ENCODE measurements at regions of chr22 and their contacts with region 1.

Region 1: DNA sequence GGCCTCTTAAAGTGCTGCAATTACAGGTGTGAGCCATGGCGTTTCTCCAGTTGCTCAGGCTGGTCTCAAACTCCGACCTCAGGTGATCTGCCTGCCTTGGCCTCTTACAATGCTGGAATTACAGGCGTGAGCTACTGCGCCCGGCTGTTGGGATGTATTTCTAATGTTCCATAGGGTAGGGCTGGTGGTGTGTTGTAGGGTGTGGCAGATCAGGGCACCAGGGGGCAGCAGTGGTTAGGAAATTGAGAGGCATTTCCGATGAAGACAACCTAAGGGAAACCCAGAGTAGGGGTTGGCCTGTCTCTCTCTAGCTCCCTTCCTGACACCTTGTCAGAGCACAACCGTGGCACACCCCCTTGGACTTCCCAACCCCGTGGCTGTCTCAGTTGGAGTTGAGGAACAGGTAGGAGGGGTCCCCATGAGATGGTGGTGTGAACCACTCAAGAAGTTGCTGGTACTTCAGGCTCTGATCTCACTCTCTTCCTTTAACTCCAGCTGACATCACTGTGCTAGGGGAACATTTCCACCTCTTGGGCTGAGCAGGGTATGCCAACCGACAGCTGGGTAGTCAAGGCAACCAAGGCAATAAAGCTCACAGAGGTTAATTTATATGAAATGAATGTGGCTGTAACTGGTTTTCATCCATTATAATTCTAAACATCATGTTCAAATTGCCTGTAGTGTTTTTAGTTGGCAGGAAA is 33.0 kb downstream of the YWHAH start:
- DNase-seq: peak; percentile 89
- H3K4me3 Mint-ChIP-seq: no peak overlapping the region
- H3K27ac Mint-ChIP-seq: no peak overlapping the region
- H3K4me1 Mint-ChIP-seq: peaks cover 2% of the 10 kb centered on the region
- H3K27me3 Mint-ChIP-seq: peaks cover 2% of the 10 kb centered on the region

Region 2: DNA sequence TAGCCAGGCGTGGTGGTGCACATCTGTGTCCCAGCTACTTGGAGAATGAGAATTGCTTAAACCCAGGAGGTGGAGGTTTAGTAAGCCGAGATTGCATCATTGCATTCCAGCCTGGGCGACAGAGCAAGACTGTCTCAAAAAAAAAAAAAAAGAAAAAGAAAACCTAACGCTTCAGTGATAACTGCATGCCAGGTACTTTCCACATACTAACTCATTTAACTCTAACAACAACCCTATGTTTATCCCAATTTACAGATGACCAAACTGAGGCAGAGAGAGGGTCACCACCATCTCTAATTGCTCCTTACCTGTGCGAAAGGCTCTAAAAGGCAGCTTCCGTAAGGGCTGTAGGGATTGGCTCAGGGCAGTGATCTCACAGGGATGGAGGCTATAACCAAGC is 326.9 kb before region 1 on chr22:
- CTCF ChIA-PET with region 1: no interaction called
- POLR2A ChIA-PET with region 1: no interaction called
- intact Hi-C with region 1: no loop called
- DNase-seq: no peak
- H3K4me3 Mint-ChIP-seq: no peak overlapping the region
- H3K27ac Mint-ChIP-seq: no peak overlapping the region
- H3K4me1 Mint-ChIP-seq: peaks cover 59% of the 10 kb centered on the region
- H3K27me3 Mint-ChIP-seq: no peaks in the 10 kb centered on the region

Region 3: DNA sequence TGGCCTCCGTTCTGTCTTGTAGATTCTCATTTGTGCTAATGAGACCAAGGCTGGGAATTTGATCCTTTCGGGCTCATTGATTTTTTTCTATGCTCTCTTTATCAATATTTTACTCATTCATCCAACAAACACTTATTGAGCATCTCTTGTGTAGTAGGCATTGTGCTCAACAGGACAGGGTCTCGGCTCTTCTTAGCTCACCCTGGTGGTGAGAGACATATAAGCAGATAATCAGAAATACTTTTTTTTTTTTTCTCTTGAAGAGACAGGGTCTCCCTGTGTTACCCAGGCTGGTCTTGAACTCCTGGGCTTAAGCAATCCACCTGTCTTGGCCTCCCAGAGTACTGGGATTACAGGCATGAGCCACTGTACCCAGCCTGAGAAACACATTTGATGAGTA is 17.8 kb after region 1 on chr22:
- CTCF ChIA-PET with region 1: interaction called, 12 read pairs
- POLR2A ChIA-PET with region 1: no interaction called
- intact Hi-C with region 1: no loop called
- DNase-seq: no peak
- H3K4me3 Mint-ChIP-seq: no peak overlapping the region
- H3K27ac Mint-ChIP-seq: no peak overlapping the region
- H3K4me1 Mint-ChIP-seq: no peaks in the 10 kb centered on the region
- H3K27me3 Mint-ChIP-seq: peaks cover 9% of the 10 kb centered on the region

Region 4: GRCh38 chr22:32059426-32059825 is 82.1 kb after region 1 on chr22:
- CTCF ChIA-PET with region 1: no interaction called
- POLR2A ChIA-PET with region 1: no interaction called
- intact Hi-C with region 1: no loop called
- DNase-seq: no peak
- H3K4me3 Mint-ChIP-seq: no peak overlapping the region
- H3K27ac Mint-ChIP-seq: no peak overlapping the region
- H3K4me1 Mint-ChIP-seq: no peaks in the 10 kb centered on the region
- H3K27me3 Mint-ChIP-seq: peaks cover 51% of the 10 kb centered on the region

Region 5: GRCh38 chr22:32069579-32070372 is 92.5 kb after region 1 on chr22:
- CTCF ChIA-PET with region 1: interaction called, 14 read pairs
- POLR2A ChIA-PET with region 1: no interaction called
- intact Hi-C with region 1: no loop called
- DNase-seq: no peak
- H3K4me3 Mint-ChIP-seq: no peak overlapping the region
- H3K27ac Mint-ChIP-seq: no peak overlapping the region
- H3K4me1 Mint-ChIP-seq: no peaks in the 10 kb centered on the region
- H3K27me3 Mint-ChIP-seq: peaks cover 18% of the 10 kb centered on the region

Region 6: GRCh38 chr22:32088084-32088483 is 110.8 kb after region 1 on chr22:
- CTCF ChIA-PET with region 1: interaction called, 241 read pairs
- POLR2A ChIA-PET with region 1: no interaction called
- intact Hi-C with region 1: no loop called
- DNase-seq: no peak
- H3K4me3 Mint-ChIP-seq: no peak overlapping the region
- H3K27ac Mint-ChIP-seq: no peak overlapping the region
- H3K4me1 Mint-ChIP-seq: no peaks in the 10 kb centered on the region
- H3K27me3 Mint-ChIP-seq: peaks cover 18% of the 10 kb centered on the region

Region 7: GRCh38 chr22:32265882-32266767 is 288.8 kb after region 1 on chr22:
- CTCF ChIA-PET with region 1: interaction called, 18 read pairs
- POLR2A ChIA-PET with region 1: no interaction called
- intact Hi-C with region 1: loop called (anchors 2 kb)
- DNase-seq: peak; percentile 83
- H3K4me3 Mint-ChIP-seq: no peak overlapping the region
- H3K27ac Mint-ChIP-seq: no peak overlapping the region
- H3K4me1 Mint-ChIP-seq: peaks cover 9% of the 10 kb centered on the region
- H3K27me3 Mint-ChIP-seq: peaks cover 9% of the 10 kb centered on the region

Measured in activated CD4-positive, alpha-beta memory T cell treated with anti-CD3 and anti-CD28 coated beads for 36 hours (primary cell).